Kidney (tissue), 22 donors: ENCODE measurements at regions of chr13 and their contacts with region 1.

Region 1: GRCh38 chr13:36999054-36999714 is at the start of gene ALG5:
- DNase-seq: peak; percentile 92 to 96 (median 95)
- H3K4me3 ChIP-seq: peak within 1 kb of the TSS; percentile 96 to 97 (median 96)
- H3K27ac ChIP-seq: peak within 1 kb of the TSS; percentile 98
- H3K4me1 ChIP-seq: peaks cover 3 to 9% (median 5%) of the 10 kb centered on the region in 3 donors
- H3K27me3 ChIP-seq: no peaks in the 10 kb centered on the region
- CTCF ChIP-seq: peak; percentile 89
- total RNA-seq, gene ALG5: 42.6 TPM

Region 2: GRCh38 chr13:36420437-36420891 is 578.7 kb before region 1 on chr13:
- intact Hi-C with region 1: loop called (anchors 10 kb)
- DNase-seq: peak; percentile 67 to 87 (median 81)
- H3K4me3 ChIP-seq: no peak overlapping the region
- H3K27ac ChIP-seq: no peak overlapping the region
- H3K4me1 ChIP-seq: peaks cover 0 to 2% (median 0%) of the 10 kb centered on the region in 3 donors
- H3K27me3 ChIP-seq: no peaks in the 10 kb centered on the region
- CTCF ChIP-seq: peak; percentile 89

Region 3: DNA sequence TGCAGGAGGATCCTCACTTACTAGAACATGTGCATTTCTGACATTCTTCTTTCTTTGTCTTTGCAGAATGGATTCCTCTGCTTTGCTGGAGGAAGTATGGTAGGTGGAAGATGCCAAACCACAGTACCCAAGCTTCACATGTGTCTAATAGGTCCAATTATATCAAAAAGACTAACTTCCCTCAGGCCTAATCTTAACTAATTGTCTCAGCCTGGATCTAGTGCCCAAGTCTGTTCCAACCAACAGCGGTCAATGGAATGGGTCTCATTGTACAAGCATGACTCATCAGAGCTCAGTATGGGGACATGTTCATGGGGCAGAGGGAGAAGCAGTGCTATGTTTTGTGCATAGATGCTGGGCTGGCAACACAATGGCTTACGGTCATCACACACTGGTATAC is 187.9 kb after region 1 on chr13:
- intact Hi-C with region 1: no loop called
- DNase-seq: no peak
- H3K4me3 ChIP-seq: no peak overlapping the region
- H3K27ac ChIP-seq: no peak overlapping the region
- H3K4me1 ChIP-seq: no peaks in the 10 kb centered on the region
- H3K27me3 ChIP-seq: no peaks in the 10 kb centered on the region
- CTCF ChIP-seq: no peak